Heart right ventricle (tissue), 16 donors: ENCODE measurements at regions of chr18 and their contacts with region 1.

Region 1: DNA sequence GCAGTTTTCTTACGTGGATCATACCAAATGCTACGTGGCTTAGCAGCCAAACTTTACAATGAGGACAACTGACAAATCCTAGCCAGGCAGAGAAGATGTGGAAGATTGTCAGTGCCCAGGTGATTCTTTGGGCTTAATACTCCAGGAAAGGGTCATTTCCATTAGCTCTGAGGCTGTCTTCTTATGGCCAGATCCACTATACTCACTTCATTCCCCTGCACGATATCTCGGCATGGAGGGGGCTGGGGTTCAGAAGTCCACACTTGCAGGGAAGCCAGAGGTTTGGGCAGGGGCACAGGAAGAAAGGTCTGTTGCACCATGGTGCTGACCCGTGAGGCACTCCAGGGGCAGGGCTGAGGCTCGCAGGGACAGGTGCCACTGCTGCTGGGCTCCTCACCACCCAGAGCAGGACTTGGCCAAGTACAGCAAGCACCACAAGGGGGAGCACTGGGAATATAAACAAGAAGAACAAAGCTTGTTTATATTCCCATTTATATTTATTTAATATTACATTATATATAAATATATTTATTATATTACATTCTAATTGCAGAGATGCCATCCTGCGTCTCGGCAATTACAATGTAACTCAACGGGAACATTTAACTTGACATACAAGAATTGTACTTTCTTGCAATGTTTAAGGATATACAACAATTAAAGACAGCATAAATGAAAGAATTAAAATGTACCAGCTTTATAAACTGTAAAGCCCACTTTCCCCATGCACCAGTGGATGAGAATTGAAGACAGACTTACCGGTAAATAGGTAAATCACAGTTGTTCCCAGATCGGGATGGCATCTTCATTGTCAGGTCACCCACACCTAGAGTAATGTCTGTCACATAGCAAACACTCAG is 27.2 kb downstream of the CLUL1 start:
- DNase-seq: peak; percentile 43 to 62
- ATAC-seq: peak in 5 of 8 donors; percentile 49 to 75 (median 73)
- H3K4me3 ChIP-seq: no peak overlapping the region
- H3K27ac ChIP-seq: no peak overlapping the region
- H3K4me1 ChIP-seq: no peaks in the 10 kb centered on the region
- H3K27me3 ChIP-seq: peaks cover 0 to 16% (median 0%) of the 10 kb centered on the region in 7 donors
- CTCF ChIP-seq: peak; percentile 48 to 85 (median 80)

Region 2: DNA sequence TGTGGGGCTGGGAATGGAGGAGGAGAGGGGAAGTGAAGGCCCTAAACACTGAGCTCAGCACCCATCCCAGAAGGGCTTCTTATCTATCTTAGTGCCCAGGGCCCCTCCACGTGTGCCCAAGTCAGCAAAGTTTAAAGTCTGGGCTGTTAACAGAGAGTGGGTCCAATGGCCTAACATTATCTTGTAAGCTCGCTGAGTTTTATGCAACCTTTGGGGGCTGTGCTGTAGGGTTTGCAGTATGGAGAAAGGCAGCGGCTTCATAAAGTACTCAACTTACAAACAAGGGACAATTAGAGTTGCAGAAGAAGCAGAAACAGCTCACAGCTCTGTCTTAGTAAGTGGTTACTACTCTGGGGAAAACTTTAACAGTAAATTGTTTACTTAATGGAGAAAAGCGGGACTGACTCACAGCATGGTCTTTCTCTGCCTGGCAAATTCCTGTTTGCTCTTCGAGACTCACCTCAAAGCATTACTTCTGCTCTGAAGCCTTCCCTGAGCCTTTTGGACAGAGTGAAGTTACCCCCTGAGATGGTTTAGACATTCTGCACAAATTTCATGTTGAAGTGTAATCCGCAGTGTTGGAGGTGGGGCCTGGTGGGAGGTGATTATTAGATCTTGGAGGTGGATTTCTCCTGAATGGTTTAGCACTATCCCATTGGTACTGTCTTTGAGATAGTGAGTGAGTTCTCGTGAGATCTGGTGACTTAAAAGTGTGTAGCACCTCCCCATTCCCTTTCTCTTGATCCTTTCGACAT is 79.4 kb after region 1 on chr18:
- intact Hi-C with region 1: loop called in 1 of 10 experiments (anchors 10 kb)
- DNase-seq: no peak
- ATAC-seq: no peak
- H3K4me3 ChIP-seq: no peak overlapping the region
- H3K27ac ChIP-seq: no peak overlapping the region
- H3K4me1 ChIP-seq: no peaks in the 10 kb centered on the region
- H3K27me3 ChIP-seq: no peaks in the 10 kb centered on the region
- CTCF ChIP-seq: no peak

Region 3: DNA sequence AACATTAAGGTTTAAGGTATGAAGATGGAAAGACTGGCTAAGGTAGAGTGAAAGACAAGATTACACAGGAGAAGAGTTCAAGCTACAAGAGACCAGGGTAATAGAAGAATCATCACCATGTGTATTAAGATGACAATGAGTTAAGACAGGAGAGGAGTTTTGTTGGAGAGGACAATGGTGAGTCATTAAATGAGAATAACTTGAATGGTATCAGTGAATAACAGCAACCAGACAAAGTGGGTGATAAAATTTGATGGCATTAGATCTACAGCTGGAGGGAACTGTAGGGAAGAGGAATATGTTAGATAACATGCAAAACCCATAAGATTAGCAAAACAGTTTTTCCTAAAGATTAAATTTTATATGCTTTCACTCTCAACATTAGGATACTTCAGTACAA is 107.2 kb after region 1 on chr18:
- intact Hi-C with region 1: loop called in 1 of 10 experiments (anchors 10 kb)
- DNase-seq: no peak
- ATAC-seq: no peak
- H3K4me3 ChIP-seq: no peak overlapping the region
- H3K27ac ChIP-seq: no peak overlapping the region
- H3K4me1 ChIP-seq: no peaks in the 10 kb centered on the region
- H3K27me3 ChIP-seq: no peaks in the 10 kb centered on the region
- CTCF ChIP-seq: no peak

Region 4: DNA sequence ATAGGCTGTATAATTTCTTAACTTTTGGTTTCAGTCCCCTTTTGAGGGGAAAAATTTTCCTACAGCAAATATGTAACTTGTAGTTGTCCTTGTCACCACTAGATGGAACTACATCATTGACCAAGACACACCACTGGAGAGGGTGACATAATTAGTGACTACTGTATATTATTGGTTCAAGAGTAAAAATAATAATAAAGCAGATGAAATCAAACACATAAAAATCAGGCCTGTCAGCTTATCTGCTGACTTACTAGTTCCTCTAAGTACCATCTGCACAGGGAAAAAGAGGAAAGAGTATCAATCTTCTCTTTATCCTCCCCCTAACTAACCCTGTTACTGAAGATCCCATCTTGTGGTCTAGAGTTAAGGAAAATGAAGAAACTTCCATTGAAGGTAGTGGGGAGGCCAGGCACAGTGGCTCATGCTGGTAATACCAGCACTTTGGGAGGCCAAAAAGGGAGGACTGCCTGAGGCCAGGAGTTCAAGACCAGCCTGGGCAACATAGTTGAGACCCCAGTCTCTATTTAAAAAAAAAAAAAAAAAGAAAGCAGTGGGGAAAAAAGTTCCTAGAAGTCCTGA is 118.0 kb after region 1 on chr18:
- intact Hi-C with region 1: loop called in 2 of 10 experiments (anchors 5 to 10 kb)
- DNase-seq: no peak
- ATAC-seq: peak; percentile 55 to 87 (median 76)
- H3K4me3 ChIP-seq: no peak overlapping the region
- H3K27ac ChIP-seq: peak overlapping the region in 2 of 10 donors; percentile 21 to 42
- H3K4me1 ChIP-seq: peaks cover 0 to 10% (median 0%) of the 10 kb centered on the region in 9 donors
- H3K27me3 ChIP-seq: no peaks in the 10 kb centered on the region
- CTCF ChIP-seq: peak; percentile 65 to 89 (median 80)

Region 5: GRCh38 chr18:824179-824578 is 200.2 kb after region 1 on chr18:
- intact Hi-C with region 1: no loop called
- DNase-seq: no peak
- ATAC-seq: no peak
- H3K4me3 ChIP-seq: no peak overlapping the region
- H3K27ac ChIP-seq: no peak overlapping the region
- H3K4me1 ChIP-seq: no peaks in the 10 kb centered on the region
- H3K27me3 ChIP-seq: peaks cover 0 to 76% (median 0%) of the 10 kb centered on the region in 7 donors
- CTCF ChIP-seq: no peak